Naive thymus-derived CD4-positive, alpha-beta T cell (primary cell): ENCODE measurements at regions of chr12 and their contacts with region 1.

Region 1: GRCh38 chr12:46661110-46661845 is 164.5 kb downstream of the SLC38A4 start:
- DNase-seq: peak in 7 of 9 donors; percentile 18 to 61 (median 50)
- ATAC-seq: peak; percentile 79
- H3K4me3 ChIP-seq: no peak overlapping the region
- H3K4me3 Mint-ChIP-seq: peak overlapping the region in 2 of 10 donors; percentile 31 to 43
- H3K27ac ChIP-seq: no peak overlapping the region
- H3K27ac Mint-ChIP-seq: peak overlapping the region in 4 of 9 donors; percentile 32 to 58 (median 40)
- H3K4me1 ChIP-seq: peaks cover 0 to 9% of the 10 kb centered on the region in 2 donors
- H3K4me1 Mint-ChIP-seq: peaks cover 11 to 53% (median 28%) of the 10 kb centered on the region in 7 donors
- H3K27me3 ChIP-seq: no peaks in the 10 kb centered on the region
- H3K27me3 Mint-ChIP-seq: no peaks in the 10 kb centered on the region

Region 2: DNA sequence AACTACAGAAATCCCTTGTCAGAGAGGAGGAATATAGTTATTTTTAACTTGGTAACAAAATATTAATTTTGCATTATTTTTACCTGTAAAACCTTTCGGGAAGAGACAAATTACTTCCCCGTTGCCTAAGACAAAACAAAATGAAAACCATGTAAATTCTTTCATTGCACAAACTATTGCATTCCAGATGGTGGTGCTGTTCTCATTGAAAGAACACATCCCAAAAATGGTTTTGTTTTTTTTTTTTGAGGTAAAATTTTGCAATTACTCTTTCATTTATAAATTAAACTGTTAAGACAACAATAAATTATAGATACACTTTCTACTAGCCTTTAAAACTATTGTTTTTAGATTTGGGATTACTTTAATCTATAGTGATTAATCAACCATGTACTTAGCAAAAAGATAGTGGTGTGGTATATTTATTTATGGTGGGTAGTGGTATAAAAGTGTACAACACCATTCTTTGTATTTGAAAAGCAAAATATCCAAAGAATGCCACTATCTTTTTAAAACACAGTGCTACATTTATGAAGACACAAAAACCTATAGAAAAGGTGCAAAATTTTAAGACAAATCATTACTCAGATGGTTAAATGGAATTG is 507.9 kb before region 1 on chr12:
- CTCF ChIA-PET with region 1: interaction called, 4 read pairs
- POLR2A ChIA-PET with region 1: interaction called, 3 read pairs
- intact Hi-C with region 1: loop called in 1 of 2 experiments (anchors 1 kb)
- DNase-seq: peak in 6 of 9 donors; percentile 26 to 61 (median 47)
- ATAC-seq: no peak
- H3K4me3 ChIP-seq: no peak overlapping the region
- H3K4me3 Mint-ChIP-seq: peak overlapping the region in 4 of 10 donors; percentile 31 to 52 (median 40)
- H3K27ac ChIP-seq: no peak overlapping the region
- H3K27ac Mint-ChIP-seq: no peak overlapping the region
- H3K4me1 ChIP-seq: peaks cover 0 to 17% of the 10 kb centered on the region in 2 donors
- H3K4me1 Mint-ChIP-seq: peaks cover 3 to 31% (median 13%) of the 10 kb centered on the region in 7 donors
- H3K27me3 ChIP-seq: no peaks in the 10 kb centered on the region
- H3K27me3 Mint-ChIP-seq: peaks cover 0 to 19% (median 4%) of the 10 kb centered on the region in 5 donors

Region 3: GRCh38 chr12:46333209-46333608 is 328.1 kb before region 1 on chr12:
- CTCF ChIA-PET with region 1: no interaction called
- POLR2A ChIA-PET with region 1: no interaction called
- intact Hi-C with region 1: no loop called
- DNase-seq: no peak
- ATAC-seq: no peak
- H3K4me3 ChIP-seq: no peak overlapping the region
- H3K4me3 Mint-ChIP-seq: no peak overlapping the region
- H3K27ac ChIP-seq: no peak overlapping the region
- H3K27ac Mint-ChIP-seq: no peak overlapping the region
- H3K4me1 ChIP-seq: no peaks in the 10 kb centered on the region
- H3K4me1 Mint-ChIP-seq: no peaks in the 10 kb centered on the region
- H3K27me3 ChIP-seq: no peaks in the 10 kb centered on the region
- H3K27me3 Mint-ChIP-seq: peaks cover 0 to 13% (median 0%) of the 10 kb centered on the region in 5 donors

Region 4: GRCh38 chr12:46354111-46354798 is 307.0 kb before region 1 on chr12:
- CTCF ChIA-PET with region 1: interaction called, 4 read pairs
- POLR2A ChIA-PET with region 1: no interaction called
- intact Hi-C with region 1: loop called (anchors 1 to 5 kb)
- DNase-seq: no peak
- ATAC-seq: peak; percentile 38
- H3K4me3 ChIP-seq: no peak overlapping the region
- H3K4me3 Mint-ChIP-seq: no peak overlapping the region
- H3K27ac ChIP-seq: no peak overlapping the region
- H3K27ac Mint-ChIP-seq: peak overlapping the region in 4 of 9 donors; percentile 29 to 75 (median 54)
- H3K4me1 ChIP-seq: peaks cover 0 to 7% of the 10 kb centered on the region in 2 donors
- H3K4me1 Mint-ChIP-seq: peaks cover 6 to 32% (median 15%) of the 10 kb centered on the region in 7 donors
- H3K27me3 ChIP-seq: no peaks in the 10 kb centered on the region
- H3K27me3 Mint-ChIP-seq: no peaks in the 10 kb centered on the region

Region 5: GRCh38 chr12:46459861-46460545 is 201.3 kb before region 1 on chr12:
- CTCF ChIA-PET with region 1: interaction called, 5 read pairs
- POLR2A ChIA-PET with region 1: interaction called, 3 read pairs
- intact Hi-C with region 1: loop called (anchors 1 to 10 kb)
- DNase-seq: peak in 4 of 9 donors; percentile 10 to 38 (median 26)
- ATAC-seq: peak; percentile 63
- H3K4me3 ChIP-seq: peak overlapping the region; percentile 47
- H3K4me3 Mint-ChIP-seq: peak overlapping the region; percentile 74 to 95 (median 88)
- H3K27ac ChIP-seq: peak overlapping the region; percentile 42
- H3K27ac Mint-ChIP-seq: peak overlapping the region; percentile 86 to 99 (median 96)
- H3K4me1 ChIP-seq: peaks cover 26 to 56% of the 10 kb centered on the region in 2 donors
- H3K4me1 Mint-ChIP-seq: peaks cover 45 to 67% (median 61%) of the 10 kb centered on the region in 7 donors
- H3K27me3 ChIP-seq: no peaks in the 10 kb centered on the region
- H3K27me3 Mint-ChIP-seq: no peaks in the 10 kb centered on the region

Region 6: GRCh38 chr12:46534327-46534840 is 126.9 kb before region 1 on chr12:
- CTCF ChIA-PET with region 1: no interaction called
- POLR2A ChIA-PET with region 1: no interaction called
- intact Hi-C with region 1: no loop called
- DNase-seq: no peak
- ATAC-seq: no peak
- H3K4me3 ChIP-seq: no peak overlapping the region
- H3K4me3 Mint-ChIP-seq: no peak overlapping the region
- H3K27ac ChIP-seq: no peak overlapping the region
- H3K27ac Mint-ChIP-seq: no peak overlapping the region
- H3K4me1 ChIP-seq: no peaks in the 10 kb centered on the region
- H3K4me1 Mint-ChIP-seq: peaks cover 0 to 16% (median 10%) of the 10 kb centered on the region in 7 donors
- H3K27me3 ChIP-seq: no peaks in the 10 kb centered on the region
- H3K27me3 Mint-ChIP-seq: no peaks in the 10 kb centered on the region

Region 7: DNA sequence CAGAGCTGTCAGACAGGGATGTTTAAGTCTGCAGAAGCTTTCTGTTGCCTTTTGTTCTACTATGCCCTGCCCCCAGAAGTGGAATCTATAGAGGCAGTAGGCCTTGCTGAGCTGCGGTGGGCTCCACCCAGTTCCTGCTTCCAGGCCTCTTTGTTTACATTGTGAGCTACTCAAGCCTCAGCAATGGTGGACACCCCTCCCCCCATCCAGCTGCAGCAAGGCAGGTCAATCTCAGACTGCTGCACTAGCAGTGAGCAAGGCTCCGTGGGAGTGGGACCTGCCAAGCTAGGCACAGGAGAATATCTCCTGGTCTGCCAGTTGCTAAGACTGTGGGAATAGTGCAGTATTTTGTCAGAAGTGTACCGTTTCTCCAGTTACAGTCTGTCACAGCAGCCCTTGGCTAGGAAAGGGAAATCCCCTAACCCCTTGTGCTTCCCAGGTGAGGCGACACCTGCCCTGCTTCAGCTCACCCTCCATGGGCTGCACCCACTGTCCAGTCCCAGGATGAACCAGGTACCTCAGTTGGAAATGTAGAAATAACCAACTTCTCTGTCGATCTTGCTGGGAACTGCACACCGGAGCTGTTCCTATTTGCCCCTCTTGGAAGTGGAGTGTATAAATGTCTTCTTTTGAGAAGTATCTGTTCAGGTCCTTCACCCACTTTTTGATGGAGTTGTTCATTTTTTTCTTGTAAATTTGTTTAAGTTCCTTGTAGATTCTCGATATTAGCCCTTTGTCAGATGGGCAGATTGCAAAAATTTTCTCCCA is 75.2 kb before region 1 on chr12:
- CTCF ChIA-PET with region 1: interaction called, 3 read pairs
- POLR2A ChIA-PET with region 1: interaction called, 3 read pairs
- intact Hi-C with region 1: loop called (anchors 2 to 5 kb)
- DNase-seq: peak in 7 of 9 donors; percentile 33 to 81 (median 71)
- ATAC-seq: peak; percentile 27
- H3K4me3 ChIP-seq: peak overlapping the region; percentile 46
- H3K4me3 Mint-ChIP-seq: peak overlapping the region; percentile 13 to 82 (median 68)
- H3K27ac ChIP-seq: no peak overlapping the region
- H3K27ac Mint-ChIP-seq: peak overlapping the region; percentile 6 to 95 (median 91)
- H3K4me1 ChIP-seq: peaks cover 5 to 21% of the 10 kb centered on the region in 2 donors
- H3K4me1 Mint-ChIP-seq: peaks cover 29 to 79% (median 74%) of the 10 kb centered on the region in 7 donors
- H3K27me3 ChIP-seq: no peaks in the 10 kb centered on the region
- H3K27me3 Mint-ChIP-seq: no peaks in the 10 kb centered on the region